Uterus (tissue), 4 donors: ENCODE measurements at regions of chr19 and their contacts with region 1.

Region 1: GRCh38 chr19:43519436-43520088 is 7.4 kb downstream of the ETHE1 start:
- DNase-seq: peak; percentile 76 to 80
- H3K4me3 ChIP-seq: no peak overlapping the region
- H3K27ac ChIP-seq: no peak overlapping the region
- H3K4me1 ChIP-seq: no peaks in the 10 kb centered on the region
- H3K27me3 ChIP-seq: no peaks in the 10 kb centered on the region
- CTCF ChIP-seq: peak; percentile 80 to 95 (median 90)
- POLR2A ChIP-seq: no peak

Region 2: DNA sequence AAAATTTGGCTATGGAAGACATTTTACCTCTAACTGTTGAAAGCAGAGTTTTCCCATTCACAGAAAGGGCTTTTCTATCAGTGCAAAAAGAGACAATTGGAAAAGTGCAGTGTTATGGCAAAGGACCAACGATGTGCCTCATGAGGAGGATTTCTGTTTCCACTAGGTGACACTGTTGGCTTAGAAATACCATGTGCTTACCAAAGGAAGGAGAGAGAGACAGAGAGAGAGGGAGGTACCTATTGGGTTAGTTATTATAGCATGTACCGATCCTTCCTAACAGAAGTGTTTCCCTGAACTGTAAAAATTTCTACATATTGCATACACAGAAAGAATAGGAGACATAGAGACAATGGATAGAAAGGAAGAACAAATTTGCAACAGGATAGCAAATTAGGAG is 290.2 kb before region 1 on chr19:
- intact Hi-C with region 1: no loop called
- DNase-seq: no peak
- H3K4me3 ChIP-seq: no peak overlapping the region
- H3K27ac ChIP-seq: no peak overlapping the region
- H3K4me1 ChIP-seq: no peaks in the 10 kb centered on the region
- H3K27me3 ChIP-seq: no peaks in the 10 kb centered on the region
- CTCF ChIP-seq: no peak
- POLR2A ChIP-seq: no peak

Region 3: GRCh38 chr19:43446746-43447489 is 72.6 kb before region 1 on chr19:
- intact Hi-C with region 1: loop called (anchors 2 kb)
- DNase-seq: peak; percentile 69 to 80
- H3K4me3 ChIP-seq: no peak overlapping the region
- H3K27ac ChIP-seq: no peak overlapping the region
- H3K4me1 ChIP-seq: no peaks in the 10 kb centered on the region
- H3K27me3 ChIP-seq: no peaks in the 10 kb centered on the region
- CTCF ChIP-seq: peak; percentile 89 to 96 (median 94)
- POLR2A ChIP-seq: no peak

Region 4: GRCh38 chr19:43463381-43464136 is 56.0 kb before region 1 on chr19:
- intact Hi-C with region 1: loop called (anchors 5 kb)
- DNase-seq: peak; percentile 98
- H3K4me3 ChIP-seq: peak overlapping the region; percentile 62 to 65
- H3K27ac ChIP-seq: peak overlapping the region; percentile 77 to 90
- H3K4me1 ChIP-seq: peaks cover 0 to 8% of the 10 kb centered on the region in 2 donors
- H3K27me3 ChIP-seq: no peaks in the 10 kb centered on the region
- CTCF ChIP-seq: no peak
- POLR2A ChIP-seq: peak in 1 of 2 donors; percentile 53